ENCODE measurements at regions of chr21 and their contacts with region 1.

Region 1: DNA sequence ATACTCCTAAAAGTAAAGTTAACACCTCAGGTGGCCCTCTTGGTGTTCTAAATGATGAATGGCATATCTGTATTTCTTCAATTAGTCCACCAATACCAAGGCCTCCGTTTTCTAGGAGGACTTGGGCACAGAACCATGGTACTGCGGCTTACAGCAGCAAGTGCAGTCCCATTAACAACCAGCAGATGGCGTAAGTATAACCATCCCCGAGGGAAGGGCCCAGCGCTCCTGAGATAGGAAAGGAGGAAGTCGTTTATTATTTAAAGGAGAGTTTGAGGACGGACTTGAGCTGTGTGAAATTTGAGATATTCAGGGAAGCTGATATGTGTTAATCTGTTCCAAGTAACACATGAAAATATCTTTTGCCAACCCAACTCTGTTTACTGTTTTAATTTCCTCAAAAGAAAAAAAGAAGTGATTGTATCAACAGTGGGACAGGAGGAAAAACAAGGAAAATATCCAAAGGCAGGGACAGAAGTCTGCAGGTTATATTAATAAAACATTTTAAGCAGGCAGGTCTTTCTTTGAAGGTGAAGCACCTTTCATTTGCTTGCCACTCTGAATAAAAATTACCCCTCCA is 37.7 kb upstream of the KCNJ15 start:
- DNase-seq: peak; percentile 6
- H3K4me3 ChIP-seq: no peak overlapping the region
- H3K27me3 ChIP-seq: no peaks in the 10 kb centered on the region
- CTCF ChIP-seq: peak; percentile 94

Region 2: DNA sequence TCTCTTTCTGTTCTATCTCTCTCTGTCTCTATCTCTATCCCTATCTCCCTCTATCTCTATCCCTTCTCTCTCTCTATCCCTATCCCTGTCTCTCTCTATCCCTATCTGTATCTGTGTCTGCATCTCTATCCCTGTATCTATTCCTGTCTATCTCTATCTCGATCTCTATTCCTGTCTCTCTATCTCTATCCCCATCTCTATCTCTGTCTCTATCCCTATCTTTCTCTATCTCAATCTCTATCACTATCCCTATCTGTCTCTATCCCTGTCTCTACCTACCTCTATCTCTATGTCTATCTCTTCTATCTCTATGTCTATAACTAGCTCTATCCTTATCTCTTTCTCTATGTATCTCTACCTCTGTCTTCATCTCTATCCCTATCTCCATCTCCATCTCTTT is 161.5 kb before region 1 on chr21:
- CTCF ChIA-PET with region 1: no interaction called
- POLR2A ChIA-PET with region 1: no interaction called
- DNase-seq: no peak
- H3K4me3 ChIP-seq: no peak overlapping the region
- H3K27me3 ChIP-seq: 0 out of 2 replicates have a peak, but pooled peaks cover 2% of the 10 kb centered on the region
- CTCF ChIP-seq: no peak

Region 3: GRCh38 chr21:38170280-38170679 is 48.9 kb before region 1 on chr21:
- CTCF ChIA-PET with region 1: interaction called, 12 read pairs
- POLR2A ChIA-PET with region 1: no interaction called
- DNase-seq: no peak
- H3K4me3 ChIP-seq: no peak overlapping the region
- H3K27me3 ChIP-seq: no peaks in the 10 kb centered on the region
- CTCF ChIP-seq: 0 out of 2 replicates have a peak, but pooled peaks have one; percentile 26

Region 4: DNA sequence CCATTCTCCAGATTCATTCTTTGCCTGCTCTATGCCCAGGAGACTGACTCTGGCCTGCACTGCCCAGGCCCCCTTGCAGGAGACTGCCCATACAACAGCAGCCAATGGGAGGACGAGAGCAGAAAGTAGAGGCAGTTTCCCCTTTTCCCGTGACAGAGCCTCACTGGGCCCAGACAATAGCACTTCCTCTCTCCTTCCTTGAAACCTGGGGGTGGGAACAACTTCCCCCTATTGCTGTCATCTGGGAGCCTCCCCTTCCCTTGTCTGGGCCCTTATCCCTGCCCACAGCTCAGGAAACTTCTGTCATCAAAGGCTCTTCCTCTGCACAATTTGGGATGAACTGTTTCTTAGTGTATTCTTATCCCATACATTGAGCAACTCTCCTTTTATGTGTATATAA is 23.1 kb before region 1 on chr21:
- CTCF ChIA-PET with region 1: interaction called, 11 read pairs
- POLR2A ChIA-PET with region 1: no interaction called
- DNase-seq: no peak
- H3K4me3 ChIP-seq: no peak overlapping the region
- H3K27me3 ChIP-seq: peaks cover under 1% of the 10 kb centered on the region; the same call in 1 of the 2 replicates
- CTCF ChIP-seq: no peak

Region 5: DNA sequence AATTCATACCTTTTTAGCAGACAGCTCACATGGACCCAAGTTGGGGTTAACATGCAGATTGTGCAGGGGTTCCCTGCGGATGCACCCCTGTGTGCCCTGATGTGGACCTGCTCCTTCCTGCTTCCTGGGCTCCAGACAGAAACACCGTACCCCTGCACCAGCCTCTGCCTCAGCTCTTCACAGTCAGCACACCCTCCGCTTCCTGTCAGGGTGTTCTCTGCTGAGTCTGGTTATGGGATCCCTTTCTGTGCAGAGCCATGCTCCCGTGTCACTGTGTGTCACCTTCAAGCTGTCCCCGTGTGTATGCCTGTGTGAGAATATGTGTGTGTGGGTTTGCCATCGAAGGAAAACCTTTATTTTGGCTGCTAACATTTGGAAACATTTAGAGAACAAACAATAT is 11.0 kb before region 1 on chr21:
- CTCF ChIA-PET with region 1: interaction called, 37 read pairs
- POLR2A ChIA-PET with region 1: no interaction called
- DNase-seq: no peak
- H3K4me3 ChIP-seq: no peak overlapping the region
- H3K27me3 ChIP-seq: peaks cover 10% of the 10 kb centered on the region
- CTCF ChIP-seq: no peak

Region 6: DNA sequence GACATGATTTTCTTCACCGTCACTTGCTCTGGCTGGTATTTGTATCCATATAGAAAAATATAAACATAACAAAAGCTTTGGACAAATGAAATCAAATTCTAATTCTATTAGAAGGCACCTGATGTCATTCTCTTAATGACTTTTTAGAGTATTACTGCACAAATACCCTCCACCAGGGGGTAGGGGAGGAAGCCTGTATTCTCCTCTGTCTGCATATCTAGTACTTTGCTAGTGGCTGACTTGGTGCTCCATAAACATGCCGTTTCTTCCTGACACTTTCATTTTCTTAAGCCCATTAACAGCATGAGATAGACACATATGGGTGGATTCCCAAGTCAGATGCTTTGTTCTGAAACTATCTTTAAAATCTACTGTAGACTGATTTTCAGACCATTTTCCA is 17.1 kb after region 1 on chr21:
- CTCF ChIA-PET with region 1: interaction called, 30 read pairs
- POLR2A ChIA-PET with region 1: no interaction called
- DNase-seq: no peak
- H3K4me3 ChIP-seq: no peak overlapping the region
- H3K27me3 ChIP-seq: no peaks in the 10 kb centered on the region
- CTCF ChIP-seq: peak; percentile 37

Region 7: DNA sequence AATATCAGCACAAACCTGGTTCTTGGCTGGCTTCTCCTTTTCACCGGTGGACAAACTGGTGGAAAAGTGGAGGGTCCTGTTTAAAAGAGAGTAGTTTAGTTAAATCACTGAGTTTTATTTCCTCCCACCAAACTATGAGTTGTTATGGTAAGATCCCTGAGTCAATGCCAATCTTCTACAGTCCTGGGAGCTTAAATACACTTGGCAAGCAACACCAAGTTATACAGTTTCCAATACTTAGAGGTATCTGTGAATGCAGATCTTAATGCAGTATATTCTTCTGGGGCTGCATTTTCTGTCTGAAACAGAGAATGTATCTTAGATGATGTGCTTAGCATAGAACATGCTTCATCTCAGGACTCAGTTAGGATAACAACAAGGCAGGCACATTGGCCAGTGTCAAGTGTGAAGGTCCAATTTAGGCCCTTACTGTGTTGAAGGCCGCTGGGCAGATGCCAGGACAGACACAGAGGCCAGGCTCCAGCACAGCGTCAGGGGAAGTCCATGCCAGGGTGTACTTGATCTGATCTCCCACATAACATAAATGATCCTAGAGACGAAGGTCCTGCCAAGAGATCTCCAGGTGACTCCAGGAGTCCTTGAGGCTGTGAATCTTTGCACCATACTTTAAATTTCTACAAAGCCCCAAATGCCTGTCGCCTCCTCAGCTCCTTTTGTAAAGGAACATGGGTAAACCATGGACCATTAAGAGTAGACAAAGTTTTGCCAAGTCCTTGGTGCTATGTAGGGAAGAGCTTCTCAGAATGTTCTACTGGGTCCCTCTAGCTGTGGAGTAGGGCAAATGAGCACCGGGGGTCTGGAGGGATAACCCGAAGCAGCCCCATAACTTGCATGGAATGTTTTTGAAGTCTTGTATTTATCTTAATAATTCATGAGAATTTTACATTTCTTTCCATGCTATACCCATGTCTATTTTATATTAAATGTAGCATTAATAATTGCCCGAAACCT is 114.4 kb after region 1 on chr21:
- CTCF ChIA-PET with region 1: interaction called, 26 read pairs
- POLR2A ChIA-PET with region 1: no interaction called
- DNase-seq: no peak
- H3K4me3 ChIP-seq: no peak overlapping the region
- H3K27me3 ChIP-seq: no peaks in the 10 kb centered on the region
- CTCF ChIP-seq: peak; percentile 28; the same call in 1 of the 2 replicates